ENCODE measurements at regions of chr13 and their contacts with region 1.

Region 1: GRCh38 chr13:101785858-101786257 is 333.4 kb downstream of the ITGBL1 start:
- DNase-seq: peak; percentile 40 to 49
- H3K4me3 ChIP-seq: no peak overlapping the region
- H3K4me3 Mint-ChIP-seq: no peak overlapping the region
- H3K27ac Mint-ChIP-seq: no peak overlapping the region
- H3K4me1 ChIP-seq: no peaks in the 10 kb centered on the region
- H3K4me1 Mint-ChIP-seq: no peaks in the 10 kb centered on the region
- H3K27me3 ChIP-seq: no peaks in the 10 kb centered on the region
- H3K27me3 Mint-ChIP-seq: peaks cover 9% of the 10 kb centered on the region
- CTCF ChIP-seq: peak; percentile 47 to 48

Region 2: DNA sequence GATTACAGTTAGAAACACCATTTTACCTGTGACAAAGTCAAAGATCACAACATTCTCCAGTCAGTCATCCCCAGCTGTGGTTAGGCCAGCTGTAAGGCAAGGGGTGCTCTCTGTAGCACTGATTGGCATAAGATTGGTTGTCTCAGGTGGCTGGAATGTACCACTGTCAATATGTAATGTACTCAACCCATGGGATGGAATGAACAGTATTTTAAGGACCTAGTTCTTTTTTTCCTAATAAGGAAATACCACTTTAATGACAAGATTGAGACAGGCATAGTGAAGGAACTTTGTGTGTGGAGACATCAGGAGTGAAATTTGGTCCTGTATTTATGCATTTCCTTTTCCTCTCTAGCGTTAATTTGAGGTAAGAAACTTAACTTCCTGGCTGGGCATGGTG is 22.7 kb before region 1 on chr13:
- CTCF ChIA-PET with region 1: no interaction called
- POLR2A ChIA-PET with region 1: no interaction called
- intact Hi-C with region 1: no loop called
- DNase-seq: no peak
- H3K4me3 ChIP-seq: no peak overlapping the region
- H3K4me3 Mint-ChIP-seq: no peak overlapping the region
- H3K27ac Mint-ChIP-seq: no peak overlapping the region
- H3K4me1 ChIP-seq: no peaks in the 10 kb centered on the region
- H3K4me1 Mint-ChIP-seq: no peaks in the 10 kb centered on the region
- H3K27me3 ChIP-seq: no peaks in the 10 kb centered on the region
- H3K27me3 Mint-ChIP-seq: peaks cover 3% of the 10 kb centered on the region
- CTCF ChIP-seq: no peak

Region 3: GRCh38 chr13:101942038-101942437 is 156.2 kb after region 1 on chr13:
- CTCF ChIA-PET with region 1: interaction called, 6 read pairs
- POLR2A ChIA-PET with region 1: no interaction called
- intact Hi-C with region 1: loop called (anchors 1 kb)
- DNase-seq: peak in 1 of 2 experiments; percentile 39
- H3K4me3 ChIP-seq: no peak overlapping the region
- H3K4me3 Mint-ChIP-seq: no peak overlapping the region
- H3K27ac Mint-ChIP-seq: no peak overlapping the region
- H3K4me1 ChIP-seq: no peaks in the 10 kb centered on the region
- H3K4me1 Mint-ChIP-seq: no peaks in the 10 kb centered on the region
- H3K27me3 ChIP-seq: no peaks in the 10 kb centered on the region
- H3K27me3 Mint-ChIP-seq: peaks cover 3% of the 10 kb centered on the region
- CTCF ChIP-seq: peak; percentile 30 to 78

Region 4: DNA sequence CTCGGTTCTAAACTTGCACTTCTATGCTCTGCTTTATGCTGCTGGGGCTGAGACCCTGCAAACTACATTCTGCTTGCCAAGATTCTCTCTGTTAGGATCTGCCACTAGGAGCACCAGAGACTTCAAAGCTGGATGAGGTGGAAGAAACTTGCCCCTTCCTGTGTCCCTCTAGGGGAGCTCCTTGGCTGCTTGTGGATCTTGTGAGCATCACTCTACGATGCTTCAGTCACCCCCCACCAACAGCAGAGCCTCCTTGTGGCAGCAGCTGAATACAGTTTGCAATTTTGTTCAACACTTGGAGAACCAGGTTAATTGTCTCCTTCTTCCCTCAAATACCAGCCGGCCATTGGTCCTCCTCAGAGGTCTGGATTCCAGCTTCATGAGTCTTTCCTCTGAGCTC is 305.4 kb after region 1 on chr13:
- CTCF ChIA-PET with region 1: no interaction called
- POLR2A ChIA-PET with region 1: no interaction called
- intact Hi-C with region 1: loop called (anchors 1 kb)
- DNase-seq: peak; percentile 50 to 51
- H3K4me3 ChIP-seq: no peak overlapping the region
- H3K4me3 Mint-ChIP-seq: no peak overlapping the region
- H3K27ac Mint-ChIP-seq: no peak overlapping the region
- H3K4me1 ChIP-seq: no peaks in the 10 kb centered on the region
- H3K4me1 Mint-ChIP-seq: no peaks in the 10 kb centered on the region
- H3K27me3 ChIP-seq: no peaks in the 10 kb centered on the region; the same call in 1 of the 2 replicates
- H3K27me3 Mint-ChIP-seq: peaks cover 12% of the 10 kb centered on the region
- CTCF ChIP-seq: peak; percentile 28 to 41

Measured in Caco-2 (cell line).